Posterior cingulate gyrus (tissue), 11 donors: ENCODE measurements at regions of chr11 and their contacts with region 1.

Region 1: DNA sequence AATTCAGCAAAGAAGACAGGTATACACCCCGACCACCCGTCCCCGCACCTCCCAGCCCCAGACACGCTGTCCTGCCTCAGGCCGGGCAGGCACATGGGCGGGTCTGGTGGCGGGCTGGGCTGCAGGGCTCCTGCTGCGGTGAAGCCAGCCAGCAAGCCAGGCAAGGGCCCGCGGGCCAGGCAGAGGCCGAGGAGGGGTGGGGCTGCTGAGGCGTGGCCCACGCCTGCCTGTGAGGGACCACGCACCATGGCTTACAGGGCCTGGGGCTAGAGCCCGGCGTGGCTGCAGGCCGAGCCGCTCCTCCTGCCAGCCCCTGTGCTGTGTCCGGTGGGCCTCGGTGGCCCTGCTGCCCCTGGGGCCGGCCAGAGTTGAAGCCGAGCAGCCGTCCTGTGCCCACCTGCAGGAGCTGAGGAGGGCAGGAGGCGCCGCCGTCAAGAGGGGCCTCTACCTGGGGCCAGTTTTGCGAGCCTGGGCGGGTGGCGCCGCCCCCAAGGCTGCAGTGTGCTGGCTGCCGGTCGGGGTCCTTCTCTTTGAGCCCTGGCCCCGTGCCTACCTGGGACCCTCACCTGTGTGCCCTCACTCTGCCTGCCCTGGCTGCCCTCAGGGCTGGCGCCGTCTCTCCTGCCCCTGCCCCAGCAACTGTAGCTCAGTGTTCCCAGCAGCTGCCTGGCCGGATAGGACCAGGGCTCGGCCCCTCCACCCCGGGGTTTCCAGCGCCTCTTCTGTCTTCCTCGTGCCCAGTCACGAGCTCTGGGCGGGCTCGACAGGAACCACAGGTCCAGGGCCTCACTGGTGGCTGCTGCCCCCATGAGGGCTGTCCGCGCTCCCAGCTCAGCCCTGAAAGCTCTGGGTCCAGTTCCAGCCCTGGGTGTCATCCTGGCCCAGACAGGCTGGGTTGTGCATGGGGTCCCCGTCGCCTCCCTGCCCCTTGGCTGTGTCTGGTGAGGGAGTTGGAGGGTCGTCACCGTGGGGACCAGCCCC is 38.4 kb downstream of the MOB2 start:
- DNase-seq: peak in 8 of 10 donors; percentile 41 to 94 (median 62)

Region 2: DNA sequence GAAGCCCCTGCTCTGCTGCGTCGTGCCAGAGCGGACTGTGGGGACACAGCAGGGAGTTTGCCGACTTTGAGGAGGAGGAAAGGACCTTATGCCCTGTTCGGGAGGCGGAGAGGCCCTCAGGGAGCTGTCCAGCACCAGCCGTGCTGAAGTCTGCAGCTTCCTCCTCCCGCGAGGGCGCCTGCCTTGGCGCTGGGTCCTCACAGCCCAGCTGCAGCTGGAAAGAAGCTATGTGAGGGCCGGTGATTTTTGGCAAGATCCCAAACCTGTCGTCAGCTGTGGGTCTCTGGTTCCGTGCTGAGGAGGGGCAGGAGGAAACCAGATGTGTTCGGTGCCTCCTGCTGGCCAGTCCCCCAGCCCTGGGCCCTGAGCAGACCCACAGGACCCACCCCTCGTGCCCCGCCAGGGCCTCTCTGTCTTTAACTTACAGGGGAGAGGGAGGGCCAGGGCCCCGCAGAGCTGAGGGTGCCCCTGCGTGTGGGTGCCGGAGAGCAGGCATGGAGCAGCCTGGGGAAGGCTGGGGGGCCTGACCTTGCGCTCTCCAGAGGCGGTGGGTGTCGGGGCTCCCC is 46.4 kb before region 1 on chr11:
- intact Hi-C with region 1: loop called (anchors 5 kb)
- DNase-seq: peak; percentile 61 to 97 (median 76)

Region 3: GRCh38 chr11:2036863-2037486 is 588.8 kb after region 1 on chr11:
- intact Hi-C with region 1: no loop called
- DNase-seq: no peak